Activated CD4-positive, alpha-beta memory T cell treated with anti-CD3 and anti-CD28 coated beads for 36 hours (primary cell): ENCODE measurements at regions of chr12 and their contacts with region 1.

Region 1: GRCh38 chr12:9049520-9050133 is 60.3 kb downstream of the KLRG1 start:
- DNase-seq: no peak
- H3K4me3 Mint-ChIP-seq: no peak overlapping the region
- H3K27ac Mint-ChIP-seq: no peak overlapping the region
- H3K4me1 Mint-ChIP-seq: peaks cover 24% of the 10 kb centered on the region
- H3K27me3 Mint-ChIP-seq: no peaks in the 10 kb centered on the region

Region 2: DNA sequence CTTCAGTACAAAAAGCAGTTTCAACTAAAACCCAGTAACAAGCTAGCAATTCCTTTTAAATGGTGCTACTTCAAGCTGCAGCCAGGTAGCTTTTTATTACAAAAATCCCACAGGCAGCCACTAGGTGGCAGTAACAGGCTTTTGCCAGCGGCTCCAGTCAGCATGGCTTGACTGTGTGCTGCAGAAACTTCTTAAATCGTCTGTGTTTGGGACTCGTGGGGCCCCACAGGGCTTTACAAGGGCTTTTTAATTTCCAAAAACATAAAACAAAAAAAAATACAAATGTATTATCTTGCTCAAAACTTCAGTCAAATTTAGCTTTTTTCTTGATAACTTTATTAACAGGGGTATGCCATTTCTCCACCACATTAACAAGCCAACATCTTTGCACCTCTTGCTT is 505.3 kb before region 1 on chr12:
- CTCF ChIA-PET with region 1: interaction called, 28 read pairs
- POLR2A ChIA-PET with region 1: no interaction called
- intact Hi-C with region 1: loop called (anchors 5 kb)
- DNase-seq: peak; percentile 80
- H3K4me3 Mint-ChIP-seq: no peak overlapping the region
- H3K27ac Mint-ChIP-seq: no peak overlapping the region
- H3K4me1 Mint-ChIP-seq: peaks cover 9% of the 10 kb centered on the region
- H3K27me3 Mint-ChIP-seq: peaks cover 19% of the 10 kb centered on the region

Region 3: GRCh38 chr12:8681041-8681902 is 368.4 kb before region 1 on chr12:
- CTCF ChIA-PET with region 1: interaction called, 68 read pairs
- POLR2A ChIA-PET with region 1: no interaction called
- intact Hi-C with region 1: loop called (anchors 1 kb)
- DNase-seq: no peak
- H3K4me3 Mint-ChIP-seq: no peak overlapping the region
- H3K27ac Mint-ChIP-seq: no peak overlapping the region
- H3K4me1 Mint-ChIP-seq: peaks cover 2% of the 10 kb centered on the region
- H3K27me3 Mint-ChIP-seq: peaks cover 5% of the 10 kb centered on the region

Region 4: DNA sequence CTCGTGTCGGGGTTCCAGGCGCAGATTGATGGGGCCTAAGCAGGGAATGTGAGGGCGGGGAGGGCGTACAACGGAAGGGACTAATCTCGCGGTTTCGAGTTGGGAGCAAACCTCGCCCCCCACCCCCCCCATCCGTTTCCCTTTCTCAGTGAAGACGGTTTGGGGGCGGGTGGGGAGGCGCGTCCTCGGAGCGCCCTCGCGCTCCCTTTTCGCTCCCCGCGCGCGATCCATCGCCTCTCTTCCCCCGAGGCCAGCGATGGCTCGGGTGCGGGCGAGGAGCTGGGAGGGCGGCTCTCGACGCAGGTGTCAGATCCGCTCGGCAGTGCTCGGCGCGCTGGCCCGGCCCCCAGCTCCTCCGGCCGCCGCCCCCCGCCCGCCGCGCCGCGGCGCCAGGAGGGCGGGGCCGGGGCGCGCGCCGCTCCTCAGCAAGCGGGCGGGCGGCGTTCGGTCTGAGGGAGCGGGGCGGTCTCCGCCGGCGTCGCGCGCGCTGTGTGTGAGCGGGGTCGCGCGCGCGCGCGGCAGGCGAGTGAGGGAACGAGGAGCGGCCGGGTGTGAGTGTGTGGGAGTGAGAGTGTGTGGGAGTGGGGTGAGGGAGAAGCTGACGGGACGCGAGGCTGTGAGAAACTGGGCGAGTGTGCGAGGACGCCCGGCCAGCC is 352.0 kb before region 1 on chr12 and contains the start of gene RIMKLB:
- CTCF ChIA-PET with region 1: interaction called, 5 read pairs
- POLR2A ChIA-PET with region 1: no interaction called
- intact Hi-C with region 1: loop called (anchors 5 kb)
- DNase-seq: peak; percentile 76
- H3K4me3 Mint-ChIP-seq: peak within 1 kb of the TSS; percentile 92
- H3K27ac Mint-ChIP-seq: peak within 1 kb of the TSS; percentile 69
- H3K4me1 Mint-ChIP-seq: peaks cover 11% of the 10 kb centered on the region
- H3K27me3 Mint-ChIP-seq: no peaks in the 10 kb centered on the region
- total RNA-seq, gene RIMKLB: 4.6 to 4.9 TPM

Region 5: GRCh38 chr12:8890313-8891085 is 159.1 kb before region 1 on chr12:
- CTCF ChIA-PET with region 1: interaction called, 43 read pairs
- POLR2A ChIA-PET with region 1: no interaction called
- intact Hi-C with region 1: loop called (anchors 5 kb)
- DNase-seq: peak; percentile 65
- H3K4me3 Mint-ChIP-seq: peak overlapping the region; percentile 83
- H3K27ac Mint-ChIP-seq: no peak overlapping the region
- H3K4me1 Mint-ChIP-seq: peaks cover 5% of the 10 kb centered on the region
- H3K27me3 Mint-ChIP-seq: no peaks in the 10 kb centered on the region

Region 6: DNA sequence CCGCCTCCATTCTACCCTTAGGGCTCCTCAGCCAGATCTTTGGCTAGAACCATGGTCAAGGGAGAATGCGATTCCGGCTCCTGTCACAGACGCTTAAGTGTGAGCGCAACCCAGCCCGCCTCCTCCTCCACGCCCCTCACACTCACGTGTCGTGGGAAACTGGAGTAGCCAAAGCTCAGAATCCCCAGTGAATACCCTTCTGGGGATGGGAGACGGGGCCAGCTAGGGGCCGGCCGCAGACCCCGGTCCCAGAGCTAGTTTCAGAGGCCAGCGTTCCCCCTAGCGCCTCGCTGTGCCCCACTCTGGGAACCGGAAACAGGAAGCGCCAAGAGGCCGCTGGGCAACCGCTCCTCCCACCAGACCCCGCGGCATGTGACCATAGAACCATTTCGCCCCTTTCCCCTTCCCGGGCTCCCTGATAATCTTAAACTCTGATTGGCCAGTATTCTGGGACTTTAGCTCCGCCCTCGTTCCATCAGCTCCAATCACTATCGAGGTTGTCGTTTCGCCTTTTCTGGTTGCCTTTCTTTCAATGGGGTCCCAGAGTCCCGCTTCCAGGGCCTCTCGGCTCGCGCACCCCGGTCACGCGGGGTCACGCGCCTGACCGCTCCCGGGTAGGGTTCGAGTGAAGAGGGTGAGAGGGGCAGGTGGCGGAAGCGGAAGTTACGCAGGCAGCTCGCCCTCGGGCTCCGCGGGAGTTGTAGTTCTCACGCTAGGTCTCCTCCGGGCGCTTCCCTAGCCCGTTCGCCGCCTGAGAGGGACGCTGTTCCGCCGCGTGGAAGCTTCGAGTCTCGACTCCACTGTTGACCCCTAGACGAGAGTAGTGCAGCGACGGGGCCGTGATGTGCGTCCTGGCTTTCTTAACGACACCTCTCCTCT is 100.0 kb before region 1 on chr12 and contains the start of gene M6PR:
- CTCF ChIA-PET with region 1: interaction called, 128 read pairs
- POLR2A ChIA-PET with region 1: interaction called, 3 read pairs
- intact Hi-C with region 1: loop called (anchors 1 kb)
- DNase-seq: peak; percentile 96
- H3K4me3 Mint-ChIP-seq: peak within 1 kb of the TSS; percentile 99
- H3K27ac Mint-ChIP-seq: peak within 1 kb of the TSS; percentile 94
- H3K4me1 Mint-ChIP-seq: peaks cover 56% of the 10 kb centered on the region
- H3K27me3 Mint-ChIP-seq: no peaks in the 10 kb centered on the region
- total RNA-seq, gene M6PR: 150 to 164 TPM

Region 7: GRCh38 chr12:9039397-9039977 is 10.1 kb before region 1 on chr12:
- CTCF ChIA-PET with region 1: interaction called, 53 read pairs
- POLR2A ChIA-PET with region 1: no interaction called
- intact Hi-C with region 1: no loop called
- DNase-seq: no peak
- H3K4me3 Mint-ChIP-seq: no peak overlapping the region
- H3K27ac Mint-ChIP-seq: no peak overlapping the region
- H3K4me1 Mint-ChIP-seq: peaks cover 60% of the 10 kb centered on the region
- H3K27me3 Mint-ChIP-seq: no peaks in the 10 kb centered on the region